Psoas muscle (tissue), 8 donors: ENCODE measurements at regions of chr5 and their contacts with region 1.

Region 1: GRCh38 chr5:133051580-133052332 is at the start of gene HSPA4:
- DNase-seq: peak; percentile 97 to 98
- ATAC-seq: peak; percentile 91 to 92 (median 92)
- H3K4me3 ChIP-seq: peak within 1 kb of the TSS; percentile 98
- H3K27ac ChIP-seq: peak within 1 kb of the TSS; percentile 100
- H3K4me1 ChIP-seq: peaks cover 39% of the 10 kb centered on the region
- H3K27me3 ChIP-seq: no peaks in the 10 kb centered on the region
- CTCF ChIP-seq: no peak
- total RNA-seq, gene HSPA4: 108 to 154 (median 130) TPM

Region 2: GRCh38 chr5:133025804-133026663 is 25.7 kb before region 1 on chr5 and contains the start of gene ZCCHC10:
- intact Hi-C with region 1: loop called in 1 of 2 experiments (anchors 2 kb)
- DNase-seq: peak; percentile 93 to 95
- ATAC-seq: peak; percentile 99
- H3K4me3 ChIP-seq: peak within 1 kb of the TSS; percentile 80
- H3K27ac ChIP-seq: peak within 1 kb of the TSS; percentile 94
- H3K4me1 ChIP-seq: peaks cover 16% of the 10 kb centered on the region
- H3K27me3 ChIP-seq: no peaks in the 10 kb centered on the region
- CTCF ChIP-seq: no peak
- total RNA-seq, gene ZCCHC10: 19.6 to 26.7 (median 20.8) TPM